ENCODE measurements at regions of chr2 and their contacts with region 1.

Region 1: DNA sequence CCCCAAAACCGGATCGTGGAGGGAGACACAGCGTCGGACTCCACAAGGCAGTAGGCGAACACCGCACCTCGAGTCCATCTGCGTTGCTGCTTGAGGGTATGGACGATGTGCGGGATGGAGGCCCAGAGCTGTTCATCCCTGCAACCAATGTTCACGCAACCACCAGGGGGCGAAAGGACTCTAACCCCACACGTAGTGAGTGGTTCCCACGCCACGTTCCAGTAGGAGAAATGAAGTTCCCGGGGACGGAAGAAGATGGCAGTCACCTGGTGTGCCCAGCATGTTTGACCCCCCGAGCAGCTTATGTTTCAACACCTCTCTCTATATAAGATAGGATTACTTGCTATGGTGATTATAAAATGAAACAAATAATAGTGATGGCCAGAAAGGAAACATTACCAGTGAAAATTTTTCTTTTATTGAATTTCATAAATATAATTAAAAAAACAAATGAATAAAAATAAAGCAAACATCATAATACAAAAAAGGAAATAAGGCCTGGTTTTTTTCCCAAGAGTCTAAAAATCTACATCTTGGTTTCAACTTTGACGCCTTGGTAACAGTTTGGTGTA is 184.3 kb downstream of the SH3BP4 start:
- DNase-seq: no peak
- H3K4me3 ChIP-seq: no peak overlapping the region
- H3K27me3 ChIP-seq: 0 out of 2 replicates have a peak, but pooled peaks cover 1% of the 10 kb centered on the region
- CTCF ChIP-seq: peak; percentile 85

Region 2: GRCh38 chr2:235149240-235149659 is 13.2 kb after region 1 on chr2:
- CTCF ChIA-PET with region 1: interaction called, 23 read pairs
- POLR2A ChIA-PET with region 1: no interaction called
- DNase-seq: no peak
- H3K4me3 ChIP-seq: no peak overlapping the region
- H3K27me3 ChIP-seq: peaks cover 11% of the 10 kb centered on the region
- CTCF ChIP-seq: no peak

Measured in BJ (cell line).